H1 (cell line): ENCODE measurements at regions of chr2 and their contacts with region 1.

Region 1: DNA sequence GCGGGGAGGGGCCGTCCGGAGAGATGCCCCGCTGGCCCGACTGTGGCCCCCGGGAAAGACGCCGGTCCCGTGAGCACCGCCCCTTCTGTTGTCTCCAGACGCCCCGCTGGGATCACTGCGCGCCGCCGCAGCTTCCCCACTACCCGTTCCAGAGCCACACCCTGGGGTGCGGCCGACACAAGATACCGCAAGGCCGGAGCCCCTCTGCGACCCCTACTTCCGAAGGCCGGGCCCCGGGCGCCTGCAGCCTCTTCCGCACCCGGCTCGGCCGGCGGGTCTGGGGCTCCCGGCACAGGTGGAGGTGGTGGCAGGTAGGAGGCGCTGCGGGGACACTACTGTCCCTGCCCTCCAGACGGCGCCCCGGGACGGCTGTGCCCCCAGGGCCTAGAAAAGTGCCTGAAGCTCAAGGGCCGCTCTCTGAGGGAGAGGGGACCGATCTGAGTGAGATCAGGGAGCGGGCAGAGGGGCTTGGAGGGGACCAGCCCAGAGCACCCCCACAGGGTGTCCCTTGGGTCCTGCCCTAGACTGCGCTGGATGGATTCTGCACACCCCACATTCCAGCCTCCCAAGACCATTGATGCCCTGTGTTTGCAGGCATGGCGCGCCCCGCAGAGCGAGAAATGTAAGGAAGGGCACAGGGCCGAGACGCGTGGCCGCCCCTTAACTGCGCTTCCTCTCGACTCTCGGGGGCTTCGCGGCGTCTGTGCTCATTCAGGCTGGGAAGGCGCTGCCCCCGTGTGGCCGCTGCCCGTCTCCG is 80.0 kb downstream of the GFPT1 start:
- DNase-seq: peak; percentile 53 to 89
- H3K4me3 ChIP-seq: peak overlapping the region; percentile 26 to 79 (median 74)
- H3K27ac ChIP-seq: no peak overlapping the region
- H3K4me1 ChIP-seq: peaks cover 0 to 16% (median 9%) of the 10 kb centered on the region in 4 experiments; a peak in 6 of 7 replicates
- H3K27me3 ChIP-seq: peaks cover 0 to 22% (median 13%) of the 10 kb centered on the region in 4 experiments; a peak in 6 of 7 replicates
- CTCF ChIP-seq: peak; percentile 91 to 99 (median 94)
- EP300 ChIP-seq: no peak
- POLR2A ChIP-seq: no peak
- RAD21 ChIP-seq: peak; percentile 94 to 95

Region 2: DNA sequence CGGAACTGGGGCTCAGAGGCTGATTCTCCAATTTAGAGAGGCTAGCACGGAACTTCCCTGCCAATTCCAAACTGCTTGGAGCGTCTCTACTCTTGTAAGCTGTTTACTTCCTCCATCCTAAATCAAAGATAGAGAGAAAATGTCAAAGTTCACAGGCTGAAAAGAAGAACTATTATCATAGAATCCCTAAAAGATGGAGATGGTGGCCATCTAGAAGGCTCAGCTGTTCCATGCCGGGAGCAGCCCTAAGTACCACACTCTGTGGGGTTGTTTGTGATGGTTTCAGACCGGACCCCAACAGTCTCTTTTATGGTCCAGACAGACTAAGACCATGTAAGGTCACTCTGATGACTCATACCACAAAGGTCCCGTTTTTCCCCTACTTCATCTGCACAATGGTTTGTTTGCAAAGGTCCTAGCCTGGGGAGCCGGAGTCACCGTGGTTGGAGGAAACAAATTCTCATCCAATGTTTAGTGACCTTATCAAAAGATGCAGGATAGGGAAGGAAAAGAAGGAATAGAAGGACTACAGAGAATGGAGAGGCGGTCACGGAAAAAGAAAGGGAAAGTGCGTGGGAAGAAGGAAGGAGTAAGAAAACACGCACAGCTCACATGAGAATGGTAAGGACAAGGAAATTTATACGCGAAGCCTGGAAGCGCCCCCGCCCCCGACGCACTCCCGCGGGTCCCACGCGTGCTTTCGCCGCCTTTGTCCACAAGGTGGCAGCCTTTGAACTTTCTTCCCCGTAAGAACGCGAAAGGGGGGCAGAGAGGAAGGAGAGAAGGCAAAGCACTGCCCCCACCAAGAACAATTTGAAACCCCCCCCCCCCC is 294.5 kb before region 1 on chr2:
- CTCF ChIA-PET with region 1: interaction called, 12 read pairs
- POLR2A ChIA-PET with region 1: no interaction called
- DNase-seq: peak in 1 of 2 experiments; percentile 64
- H3K4me3 ChIP-seq: peak overlapping the region; percentile 85 to 98 (median 96)
- H3K27ac ChIP-seq: no peak overlapping the region
- H3K4me1 ChIP-seq: peaks cover 3 to 4% (median 3%) of the 10 kb centered on the region in 4 experiments; a peak in 3 of 7 replicates
- H3K27me3 ChIP-seq: peaks cover 0 to 10% (median 4%) of the 10 kb centered on the region in 4 experiments; a peak in 4 of 7 replicates
- CTCF ChIP-seq: peak; percentile 45 to 64 (median 51)
- EP300 ChIP-seq: no peak
- POLR2A ChIP-seq: no peak
- RAD21 ChIP-seq: peak; percentile 27 to 39

Region 3: DNA sequence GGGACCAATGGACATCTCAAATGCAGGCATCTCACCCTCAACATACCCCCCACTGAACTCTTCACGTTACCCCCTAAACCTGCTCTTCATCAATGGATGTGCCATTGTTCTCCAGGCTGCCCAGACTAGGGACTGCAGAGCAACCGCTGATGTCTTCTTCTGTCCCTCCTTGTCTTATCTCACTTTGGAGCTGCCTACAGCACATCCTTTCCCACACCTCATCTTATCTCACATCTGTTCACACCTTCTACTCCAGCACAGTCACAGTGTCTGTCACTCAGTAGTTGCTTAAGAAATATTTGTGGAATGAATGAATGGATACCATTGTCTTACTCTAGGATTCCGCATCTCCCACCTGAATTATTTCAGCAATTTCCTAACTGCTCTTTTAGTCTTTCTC is 149.6 kb before region 1 on chr2:
- CTCF ChIA-PET with region 1: interaction called, 22 read pairs
- POLR2A ChIA-PET with region 1: interaction called, 3 read pairs
- DNase-seq: no peak
- H3K4me3 ChIP-seq: no peak overlapping the region
- H3K27ac ChIP-seq: no peak overlapping the region
- H3K4me1 ChIP-seq: peaks cover 0 to 6% (median 2%) of the 10 kb centered on the region in 4 experiments; a peak in 2 of 7 replicates
- H3K27me3 ChIP-seq: no peaks in the 10 kb centered on the region
- CTCF ChIP-seq: no peak
- EP300 ChIP-seq: no peak
- POLR2A ChIP-seq: no peak
- RAD21 ChIP-seq: no peak

Region 4: GRCh38 chr2:69177785-69178636 is 129.0 kb before region 1 on chr2:
- CTCF ChIA-PET with region 1: interaction called, 15 read pairs
- POLR2A ChIA-PET with region 1: no interaction called
- DNase-seq: peak; percentile 93 to 98
- H3K4me3 ChIP-seq: peak overlapping the region in 3 of 4 experiments; percentile 9 to 47 (median 20); a peak in 3 of 8 replicates
- H3K27ac ChIP-seq: peak overlapping the region; percentile 87
- H3K4me1 ChIP-seq: peaks cover 8 to 21% (median 14%) of the 10 kb centered on the region in 4 experiments
- H3K27me3 ChIP-seq: no peaks in the 10 kb centered on the region
- CTCF ChIP-seq: no peak
- EP300 ChIP-seq: no peak
- POLR2A ChIP-seq: peak; percentile 90
- RAD21 ChIP-seq: peak in 1 of 2 experiments; percentile 9; a peak in 2 of 4 replicates